B cell (primary cell): ENCODE measurements at regions of chr5 and their contacts with region 1.

Region 1: GRCh38 chr5:116947691-116948528 is 373.3 kb upstream of the SEMA6A start:
- DNase-seq: peak; percentile 61
- ATAC-seq: peak; percentile 47
- H3K4me3 ChIP-seq: no peak overlapping the region
- H3K4me3 Mint-ChIP-seq: no peak overlapping the region
- H3K27ac ChIP-seq: no peak overlapping the region
- H3K27ac Mint-ChIP-seq: no peak overlapping the region
- H3K4me1 ChIP-seq: peaks cover 0 to 4% of the 10 kb centered on the region in 2 donors
- H3K4me1 Mint-ChIP-seq: no peaks in the 10 kb centered on the region
- H3K27me3 ChIP-seq: no peaks in the 10 kb centered on the region
- H3K27me3 Mint-ChIP-seq: no peaks in the 10 kb centered on the region
- CTCF ChIP-seq: peak; percentile 68

Region 2: GRCh38 chr5:116557669-116558271 is 390.1 kb before region 1 on chr5:
- CTCF ChIA-PET with region 1: no interaction called
- POLR2A ChIA-PET with region 1: no interaction called
- intact Hi-C with region 1: loop called (anchors 5 kb)
- DNase-seq: no peak
- ATAC-seq: no peak
- H3K4me3 ChIP-seq: no peak overlapping the region
- H3K4me3 Mint-ChIP-seq: no peak overlapping the region
- H3K27ac ChIP-seq: no peak overlapping the region
- H3K27ac Mint-ChIP-seq: no peak overlapping the region
- H3K4me1 ChIP-seq: peaks cover 6% of the 10 kb centered on the region in 2 donors
- H3K4me1 Mint-ChIP-seq: peaks cover 10% of the 10 kb centered on the region
- H3K27me3 ChIP-seq: no peaks in the 10 kb centered on the region
- H3K27me3 Mint-ChIP-seq: no peaks in the 10 kb centered on the region
- CTCF ChIP-seq: no peak

Region 3: DNA sequence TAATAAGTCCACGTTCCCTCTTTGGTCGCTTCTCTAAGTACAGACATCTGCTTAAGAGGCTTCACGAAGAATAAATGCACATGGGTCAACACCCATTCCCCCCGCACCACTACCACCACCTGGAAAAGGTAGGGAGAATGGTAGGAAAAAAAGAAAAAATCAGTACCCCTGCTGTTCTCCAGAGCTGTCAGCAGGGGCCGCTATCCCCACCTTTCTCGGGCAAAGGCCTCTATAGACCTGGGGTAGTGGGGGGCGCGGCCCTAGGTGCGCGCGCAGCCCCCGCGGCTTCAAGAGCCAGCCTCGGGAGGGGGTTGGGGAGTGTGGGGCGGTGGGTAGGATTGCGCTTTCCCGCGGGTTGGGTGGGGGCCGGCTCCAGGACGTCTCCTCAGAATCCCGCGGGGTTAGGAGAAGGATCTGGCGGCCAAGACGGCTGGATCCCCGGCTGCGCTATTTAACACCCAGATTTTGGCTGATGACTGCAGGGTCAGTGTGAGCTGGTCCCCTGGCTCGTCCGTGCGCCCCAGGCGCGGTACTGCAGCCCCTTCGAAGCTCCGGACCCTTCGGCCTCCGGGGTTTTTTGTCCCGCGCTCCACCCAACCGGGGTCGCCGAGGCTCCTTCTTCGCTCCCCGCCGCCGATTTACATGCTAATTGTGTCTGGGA is 371.7 kb before region 1 on chr5:
- CTCF ChIA-PET with region 1: interaction called, 5 read pairs
- POLR2A ChIA-PET with region 1: no interaction called
- intact Hi-C with region 1: loop called (anchors 2 kb)
- DNase-seq: peak; percentile 72
- ATAC-seq: peak; percentile 67
- H3K4me3 ChIP-seq: peak overlapping the region; percentile 12 to 60 (median 41)
- H3K4me3 Mint-ChIP-seq: peak overlapping the region; percentile 89
- H3K27ac ChIP-seq: no peak overlapping the region
- H3K27ac Mint-ChIP-seq: no peak overlapping the region
- H3K4me1 ChIP-seq: peaks cover 44 to 50% of the 10 kb centered on the region in 2 donors
- H3K4me1 Mint-ChIP-seq: peaks cover 37% of the 10 kb centered on the region
- H3K27me3 ChIP-seq: peaks cover 0 to 58% (median 38%) of the 10 kb centered on the region in 4 experiments
- H3K27me3 Mint-ChIP-seq: peaks cover 71% of the 10 kb centered on the region
- CTCF ChIP-seq: peak; percentile 72

Region 4: DNA sequence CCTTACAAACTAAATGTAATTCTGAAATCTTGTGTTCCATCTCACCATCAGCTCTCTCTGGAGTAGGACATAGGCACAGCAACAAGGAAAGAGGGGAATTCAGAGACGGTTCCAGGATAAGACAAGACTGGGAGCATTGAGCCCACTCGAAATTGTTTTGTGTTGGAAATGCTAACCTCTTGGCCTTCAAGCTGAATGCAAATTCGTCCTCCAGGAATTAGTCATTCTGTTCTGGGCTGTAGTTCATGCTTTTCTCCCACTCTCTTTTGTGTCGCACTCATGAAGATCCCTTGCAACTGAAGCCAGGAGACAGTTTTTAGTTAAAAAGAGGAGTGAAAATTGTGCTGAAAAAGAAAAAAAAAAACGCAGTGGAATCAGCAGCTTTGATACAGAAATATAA is 251.5 kb before region 1 on chr5:
- CTCF ChIA-PET with region 1: no interaction called
- POLR2A ChIA-PET with region 1: no interaction called
- intact Hi-C with region 1: no loop called
- DNase-seq: no peak
- ATAC-seq: no peak
- H3K4me3 ChIP-seq: no peak overlapping the region
- H3K4me3 Mint-ChIP-seq: no peak overlapping the region
- H3K27ac ChIP-seq: no peak overlapping the region
- H3K27ac Mint-ChIP-seq: no peak overlapping the region
- H3K4me1 ChIP-seq: no peaks in the 10 kb centered on the region
- H3K4me1 Mint-ChIP-seq: peaks cover 2% of the 10 kb centered on the region
- H3K27me3 ChIP-seq: no peaks in the 10 kb centered on the region
- H3K27me3 Mint-ChIP-seq: peaks cover 7% of the 10 kb centered on the region
- CTCF ChIP-seq: no peak

Region 5: GRCh38 chr5:116989995-116990394 is 42.1 kb after region 1 on chr5:
- CTCF ChIA-PET with region 1: no interaction called
- POLR2A ChIA-PET with region 1: no interaction called
- intact Hi-C with region 1: no loop called
- DNase-seq: no peak
- ATAC-seq: no peak
- H3K4me3 ChIP-seq: no peak overlapping the region
- H3K4me3 Mint-ChIP-seq: no peak overlapping the region
- H3K27ac ChIP-seq: no peak overlapping the region
- H3K27ac Mint-ChIP-seq: no peak overlapping the region
- H3K4me1 ChIP-seq: no peaks in the 10 kb centered on the region
- H3K4me1 Mint-ChIP-seq: no peaks in the 10 kb centered on the region
- H3K27me3 ChIP-seq: no peaks in the 10 kb centered on the region
- H3K27me3 Mint-ChIP-seq: no peaks in the 10 kb centered on the region
- CTCF ChIP-seq: no peak